AG04450 (cell line): ENCODE measurements at regions of chr7 and their contacts with region 1.

Region 1: GRCh38 chr7:4883374-4884144 is at the start of gene RADIL:
- DNase-seq: no peak
- H3K4me3 ChIP-seq: peak within 1 kb of the TSS; percentile 41
- H3K27ac ChIP-seq: peak within 1 kb of the TSS; percentile 2
- H3K27me3 ChIP-seq: peaks cover 14% of the 10 kb centered on the region
- CTCF ChIP-seq: peak; percentile 62
- polyA plus RNA-seq, gene RADIL: 0.07 and 0.31 TPM in 2 replicates

Region 2: DNA sequence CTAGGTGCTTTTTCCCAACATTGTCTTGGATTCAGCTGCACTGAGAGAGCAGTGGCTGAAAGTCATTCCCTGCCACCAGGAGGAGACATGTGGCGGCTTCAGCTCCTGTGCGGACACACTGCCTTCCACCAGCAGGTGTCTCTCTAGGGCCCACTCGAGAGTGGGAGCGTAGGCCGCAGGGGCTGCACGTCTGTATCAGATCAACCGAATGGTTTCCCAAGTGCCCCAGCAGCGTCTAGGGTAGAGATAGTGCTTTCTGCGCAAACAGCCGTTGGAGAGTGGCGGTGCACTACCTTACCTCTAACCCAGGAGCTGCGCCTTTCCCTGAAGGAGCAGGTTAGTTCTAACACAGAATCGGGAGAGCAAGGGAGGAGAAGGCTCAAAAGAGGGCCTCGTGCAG is 53.4 kb before region 1 on chr7:
- CTCF ChIA-PET with region 1: interaction called, 16 read pairs
- POLR2A ChIA-PET with region 1: no interaction called
- DNase-seq: peak; percentile 20
- H3K4me3 ChIP-seq: no peak overlapping the region
- H3K27ac ChIP-seq: no peak overlapping the region
- H3K27me3 ChIP-seq: peaks cover 2% of the 10 kb centered on the region
- CTCF ChIP-seq: peak; percentile 83

Region 3: GRCh38 chr7:4866528-4867496 is 16.7 kb before region 1 on chr7:
- CTCF ChIA-PET with region 1: no interaction called
- POLR2A ChIA-PET with region 1: no interaction called
- DNase-seq: no peak
- H3K4me3 ChIP-seq: no peak overlapping the region
- H3K27ac ChIP-seq: no peak overlapping the region
- H3K27me3 ChIP-seq: peaks cover 3% of the 10 kb centered on the region
- CTCF ChIP-seq: no peak